Activated CD4-positive, alpha-beta T cell treated with anti-CD3 and anti-CD28 coated beads for 36 hours (primary cell): ENCODE measurements at regions of chr10 and their contacts with region 1.

Region 1: DNA sequence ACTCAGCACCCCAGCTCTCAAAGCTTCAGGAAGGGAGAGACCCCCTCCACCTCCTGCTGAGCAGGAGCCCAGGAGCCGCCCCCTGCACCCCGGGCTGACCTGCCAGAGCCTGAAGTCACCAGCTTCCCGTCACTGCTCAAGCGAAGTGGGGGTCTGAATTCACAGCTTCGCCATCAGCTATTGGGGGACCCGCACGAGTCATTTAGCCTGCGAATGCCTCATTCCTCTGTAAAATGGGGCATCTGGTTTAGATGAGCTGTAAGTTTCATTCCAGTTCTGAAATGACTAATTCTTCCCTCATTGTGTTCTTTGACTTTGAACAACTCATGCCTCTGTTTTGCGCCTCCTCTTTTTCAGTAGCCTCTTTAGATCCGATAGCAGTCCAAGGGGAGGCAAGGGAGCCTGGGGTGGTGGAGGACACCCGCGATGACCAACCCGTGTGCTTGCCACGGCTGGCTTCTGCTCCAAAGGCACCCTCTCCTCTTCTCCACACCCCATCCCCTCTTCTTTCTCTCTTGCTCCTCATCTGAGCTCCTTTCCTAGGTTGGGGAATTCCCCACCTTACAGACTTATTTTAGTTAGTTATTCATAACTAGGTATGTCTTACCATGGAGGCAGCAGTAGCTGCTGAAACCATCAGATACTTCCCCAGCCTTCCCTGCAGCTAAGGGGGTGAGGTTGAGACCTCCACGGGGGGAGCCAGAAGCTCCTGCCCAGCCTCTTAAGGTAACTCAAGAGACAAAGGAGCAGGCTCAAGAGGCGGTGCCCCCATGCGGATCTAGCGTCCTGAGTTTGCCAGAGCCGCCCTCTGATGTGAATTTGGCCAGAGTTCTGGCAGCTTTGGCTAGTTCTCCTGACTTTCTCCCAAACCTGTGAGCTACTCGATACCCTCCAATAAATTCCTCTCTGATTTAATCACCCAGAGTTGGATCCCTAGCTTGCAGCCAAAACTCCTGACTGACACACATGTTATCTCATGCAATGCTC is 47.7 kb downstream of the RBM17 start:
- DNase-seq: peak; percentile 83
- ATAC-seq: peak; percentile 81
- H3K4me3 Mint-ChIP-seq: peak overlapping the region; percentile 61
- H3K27ac Mint-ChIP-seq: peak overlapping the region; percentile 89
- H3K4me1 Mint-ChIP-seq: peaks cover 71% of the 10 kb centered on the region
- H3K27me3 Mint-ChIP-seq: peaks cover 6% of the 10 kb centered on the region

Region 2: GRCh38 chr10:6108603-6109443 is 27.7 kb before region 1 on chr10:
- CTCF ChIA-PET with region 1: interaction called, 14 read pairs
- POLR2A ChIA-PET with region 1: no interaction called
- intact Hi-C with region 1: no loop called
- DNase-seq: peak; percentile 45
- ATAC-seq: peak; percentile 63
- H3K4me3 Mint-ChIP-seq: no peak overlapping the region
- H3K27ac Mint-ChIP-seq: peak overlapping the region; percentile 89
- H3K4me1 Mint-ChIP-seq: peaks cover 31% of the 10 kb centered on the region
- H3K27me3 Mint-ChIP-seq: no peaks in the 10 kb centered on the region

Region 3: DNA sequence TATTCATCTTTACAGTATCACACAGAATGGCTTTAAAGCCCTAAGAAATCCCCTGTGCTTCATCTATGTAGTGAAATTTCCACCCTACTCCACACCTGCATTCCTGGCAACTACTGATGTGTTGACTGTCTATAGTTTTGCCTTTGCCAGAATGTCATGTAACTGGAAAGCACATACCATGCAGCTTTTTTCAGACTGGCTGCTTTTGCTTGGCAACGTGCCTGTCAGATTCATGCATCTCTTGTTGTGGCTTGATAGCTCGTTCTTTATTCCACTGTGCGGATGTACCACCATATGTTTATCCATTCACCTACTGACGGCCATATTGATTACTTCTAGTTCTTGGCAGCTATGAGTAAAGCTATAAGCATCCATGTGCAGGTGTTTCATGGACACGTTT is 17.1 kb before region 1 on chr10:
- CTCF ChIA-PET with region 1: interaction called, 5 read pairs
- POLR2A ChIA-PET with region 1: interaction called, 10 read pairs
- intact Hi-C with region 1: no loop called
- DNase-seq: peak; percentile 58
- ATAC-seq: peak; percentile 72
- H3K4me3 Mint-ChIP-seq: no peak overlapping the region
- H3K27ac Mint-ChIP-seq: peak overlapping the region; percentile 58
- H3K4me1 Mint-ChIP-seq: peaks cover 37% of the 10 kb centered on the region
- H3K27me3 Mint-ChIP-seq: no peaks in the 10 kb centered on the region

Region 4: DNA sequence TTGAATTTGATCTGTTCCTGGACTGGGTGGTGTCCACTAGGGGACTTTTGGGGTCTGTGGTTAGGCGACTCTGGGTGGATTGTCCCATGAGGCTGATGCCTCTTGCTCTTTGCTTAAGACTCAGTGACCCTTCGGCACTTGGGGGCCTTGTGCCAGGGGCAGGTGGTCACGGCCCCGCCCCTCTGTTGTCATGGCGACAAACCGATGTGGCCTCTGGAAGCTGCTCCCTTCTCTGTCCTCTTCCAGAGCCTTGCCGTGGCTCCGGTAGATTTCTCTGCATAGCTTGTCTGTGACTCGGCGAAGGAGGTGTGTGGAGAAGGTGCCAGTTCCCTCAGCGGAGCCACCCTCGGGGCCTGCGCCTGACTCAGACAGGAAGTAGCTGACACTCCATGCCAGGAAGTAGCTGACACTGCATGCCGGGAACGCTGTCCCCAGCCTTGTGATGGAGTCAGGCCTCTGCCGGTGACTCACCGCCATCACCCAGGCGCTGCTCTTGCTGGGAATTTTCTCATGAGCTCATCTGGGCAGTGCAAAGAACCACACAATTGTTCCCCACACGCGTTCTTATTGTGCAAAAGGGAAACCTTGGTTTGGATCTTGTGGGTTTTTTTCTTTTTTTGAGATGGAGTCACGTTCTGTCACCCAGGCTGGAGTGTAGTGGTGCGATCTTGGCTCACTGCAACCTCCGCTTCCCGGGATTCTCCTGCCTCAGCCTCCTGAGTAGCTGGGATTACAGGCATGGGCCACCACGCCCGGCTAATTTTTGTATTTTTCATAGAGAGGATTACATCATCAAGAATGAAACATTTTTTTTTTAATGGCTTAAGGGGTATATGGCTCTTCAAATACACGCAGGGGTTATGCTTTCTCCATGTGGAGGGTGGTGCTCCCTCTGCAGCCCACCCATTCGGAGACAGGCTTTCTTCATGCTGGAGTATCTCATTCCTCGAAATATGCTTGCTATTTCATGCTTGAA is 138.8 kb after region 1 on chr10:
- CTCF ChIA-PET with region 1: no interaction called
- POLR2A ChIA-PET with region 1: no interaction called
- intact Hi-C with region 1: loop called in 1 of 2 experiments (anchors 2 kb)
- DNase-seq: peak; percentile 97
- ATAC-seq: peak; percentile 91
- H3K4me3 Mint-ChIP-seq: peak overlapping the region; percentile 70
- H3K27ac Mint-ChIP-seq: peak overlapping the region; percentile 97
- H3K4me1 Mint-ChIP-seq: peaks cover 69% of the 10 kb centered on the region
- H3K27me3 Mint-ChIP-seq: no peaks in the 10 kb centered on the region

Region 5: DNA sequence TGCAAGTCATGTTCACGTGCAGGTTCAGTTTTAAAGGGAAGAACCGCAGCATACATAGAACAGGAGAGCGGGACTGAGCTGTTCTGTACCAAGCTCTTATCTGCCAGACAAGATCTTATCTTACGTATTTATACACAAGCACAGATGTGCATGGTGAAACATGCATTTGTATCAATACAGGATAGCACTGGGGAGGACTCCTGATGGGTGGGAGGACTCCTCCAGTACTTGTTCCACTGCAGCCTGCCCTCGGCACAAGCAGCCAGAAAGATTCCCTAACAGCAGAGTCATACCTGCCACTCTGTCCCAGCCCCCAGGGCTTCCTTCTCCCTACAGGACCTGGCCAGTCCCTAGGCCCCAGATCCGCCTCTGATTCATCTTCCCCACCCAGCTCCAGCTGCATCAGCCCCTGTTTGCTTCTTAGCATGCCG is 456.7 kb after region 1 on chr10:
- CTCF ChIA-PET with region 1: no interaction called
- POLR2A ChIA-PET with region 1: no interaction called
- intact Hi-C with region 1: loop called in 1 of 2 experiments (anchors 5 kb)
- DNase-seq: peak; percentile 37
- ATAC-seq: peak; percentile 73
- H3K4me3 Mint-ChIP-seq: peak overlapping the region; percentile 33
- H3K27ac Mint-ChIP-seq: peak overlapping the region; percentile 87
- H3K4me1 Mint-ChIP-seq: peaks cover 92% of the 10 kb centered on the region
- H3K27me3 Mint-ChIP-seq: no peaks in the 10 kb centered on the region